Astrocyte of the cerebellum (primary cell): ENCODE measurements at regions of chr18 and their contacts with region 1.

Region 1: DNA sequence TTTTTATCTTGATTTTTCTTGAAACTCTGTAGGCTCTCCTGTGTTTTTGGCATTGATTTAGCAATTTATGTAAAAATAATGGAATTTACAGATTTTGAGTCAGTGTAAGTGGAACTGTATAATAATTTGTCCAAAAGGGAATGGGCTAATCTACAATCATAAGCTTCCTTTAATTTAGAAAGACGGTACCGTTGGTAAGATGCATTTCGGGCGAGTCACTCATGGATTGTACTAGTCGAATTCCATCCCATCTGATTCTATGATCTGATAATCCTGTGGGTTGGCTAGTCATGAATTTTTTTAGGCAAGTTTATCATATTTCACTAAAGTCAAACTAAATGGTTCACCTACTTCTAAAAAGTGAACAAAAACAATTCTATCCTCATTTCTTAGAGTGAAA is 133.4 kb downstream of the ZNF407 start:
- DNase-seq: peak; percentile 32
- H3K4me3 ChIP-seq: no peak overlapping the region
- CTCF ChIP-seq: no peak

Region 2: GRCh38 chr18:74551936-74552555 is 179.1 kb before region 1 on chr18:
- in situ Hi-C with region 1: no loop called
- DNase-seq: peak; percentile 75
- H3K4me3 ChIP-seq: no peak overlapping the region
- CTCF ChIP-seq: peak; percentile 84

Region 3: DNA sequence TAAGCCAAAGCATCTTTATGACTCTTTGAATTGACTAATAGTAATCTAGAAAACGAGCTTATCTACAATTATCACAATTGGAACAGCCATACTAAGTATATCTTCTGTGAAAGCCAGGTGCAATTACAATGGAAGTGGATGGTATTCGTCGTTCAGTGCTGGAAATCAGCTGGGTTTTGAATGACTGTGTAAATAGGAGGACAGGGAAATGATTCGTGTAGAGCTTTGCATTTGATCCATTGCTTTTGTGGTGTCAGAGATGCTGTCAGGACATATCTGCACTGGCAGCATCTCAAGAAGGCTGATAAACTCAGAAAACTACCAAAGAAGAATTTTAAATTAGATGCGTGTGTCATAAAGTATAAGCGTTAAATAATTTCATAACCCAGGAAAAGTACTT is 53.7 kb after region 1 on chr18:
- in situ Hi-C with region 1: loop called (anchors 5 kb)
- DNase-seq: no peak
- H3K4me3 ChIP-seq: no peak overlapping the region
- CTCF ChIP-seq: no peak